ENCODE measurements at regions of chr11 and their contacts with region 1.

Region 1: GRCh38 chr11:10221342-10221741 is 72.7 kb downstream of the SBF2 start:
- DNase-seq: no peak
- ATAC-seq: no peak
- H3K4me3 ChIP-seq: no peak overlapping the region
- H3K27ac ChIP-seq: no peak overlapping the region
- H3K4me1 ChIP-seq: peaks cover 0 to 19% (median 0%) of the 10 kb centered on the region in 9 donors
- H3K27me3 ChIP-seq: no peaks in the 10 kb centered on the region
- CTCF ChIP-seq: no peak

Region 2: GRCh38 chr11:10076458-10077141 is 144.7 kb before region 1 on chr11:
- intact Hi-C with region 1: no loop called
- DNase-seq: peak; percentile 54 to 58
- ATAC-seq: peak; percentile 49 to 87 (median 75)
- H3K4me3 ChIP-seq: no peak overlapping the region
- H3K27ac ChIP-seq: no peak overlapping the region
- H3K4me1 ChIP-seq: peaks cover 0 to 12% (median 8%) of the 10 kb centered on the region in 9 donors
- H3K27me3 ChIP-seq: no peaks in the 10 kb centered on the region
- CTCF ChIP-seq: peak in 8 of 9 donors; percentile 16 to 69 (median 44)

Region 3: DNA sequence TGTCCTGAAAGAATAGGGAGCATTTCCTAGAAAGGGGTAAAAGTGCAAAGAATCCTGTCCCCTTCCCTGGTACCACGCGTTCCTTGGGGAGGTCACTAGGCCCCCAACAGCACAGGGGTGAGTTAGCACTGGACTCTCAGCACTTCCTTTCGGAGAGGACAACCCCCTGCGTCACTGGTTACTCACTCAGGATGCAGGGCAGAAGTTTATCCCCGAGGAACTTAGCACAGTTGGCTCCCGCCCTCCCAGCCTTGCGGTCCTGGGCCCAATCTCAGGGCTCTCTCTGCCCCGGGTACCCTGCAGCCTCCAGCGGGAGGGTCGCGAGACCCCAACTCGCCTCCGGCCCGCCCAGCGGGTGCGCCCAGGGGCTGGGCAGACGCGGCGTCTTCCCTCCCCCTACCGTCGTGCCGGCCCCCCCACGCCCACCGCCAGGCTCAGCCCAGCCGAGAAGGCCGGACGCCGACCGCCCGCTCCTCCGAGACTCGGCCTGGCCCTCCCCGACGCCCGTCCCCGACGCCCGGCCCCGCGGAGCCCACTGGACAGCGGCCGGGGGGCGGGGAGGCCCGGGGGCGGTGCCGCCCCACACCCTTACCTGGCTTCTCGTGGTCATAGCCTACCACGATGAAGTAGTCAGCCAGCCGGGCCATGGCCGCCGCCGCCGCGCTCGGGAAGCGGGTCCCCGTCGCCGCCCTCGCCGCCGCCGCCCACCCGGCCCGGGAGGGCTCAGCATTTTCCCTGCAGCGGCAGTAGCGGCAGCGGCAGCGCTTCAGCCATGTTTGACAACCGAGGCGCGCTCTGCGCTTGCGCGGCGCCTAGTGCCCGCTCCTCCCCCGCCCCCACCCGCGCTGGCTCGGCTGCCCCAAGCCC is 72.3 kb after region 1 on chr11 and contains the start of gene SBF2:
- intact Hi-C with region 1: loop called in 1 of 10 experiments (anchors 5 kb)
- DNase-seq: peak; percentile 87 to 90
- ATAC-seq: peak; percentile 91 to 96 (median 93)
- H3K4me3 ChIP-seq: peak within 1 kb of the TSS; percentile 70 to 99 (median 94)
- H3K27ac ChIP-seq: peak within 1 kb of the TSS; percentile 94 to 99 (median 97)
- H3K4me1 ChIP-seq: peaks cover 0 to 63% (median 24%) of the 10 kb centered on the region in 9 donors
- H3K27me3 ChIP-seq: no peaks in the 10 kb centered on the region
- CTCF ChIP-seq: no peak
- total RNA-seq, gene SBF2: 16.2 to 27.1 (median 21.2) TPM

Measured in heart right ventricle (tissue), 16 donors.